B cell (primary cell): ENCODE measurements at regions of chr10 and their contacts with region 1.

Region 1: GRCh38 chr10:100009793-100010676 is at the start of gene DNMBP:
- DNase-seq: peak; percentile 92
- ATAC-seq: peak; percentile 87
- H3K4me3 ChIP-seq: peak within 1 kb of the TSS; percentile 82 to 95 (median 90)
- H3K4me3 Mint-ChIP-seq: peak within 1 kb of the TSS; percentile 95
- H3K27ac ChIP-seq: peak within 1 kb of the TSS; percentile 55 to 78
- H3K27ac Mint-ChIP-seq: peak within 1 kb of the TSS; percentile 94
- H3K4me1 ChIP-seq: peaks cover 49 to 54% of the 10 kb centered on the region in 2 donors
- H3K4me1 Mint-ChIP-seq: peaks cover 72% of the 10 kb centered on the region
- H3K27me3 ChIP-seq: no peaks in the 10 kb centered on the region
- H3K27me3 Mint-ChIP-seq: no peaks in the 10 kb centered on the region
- CTCF ChIP-seq: peak; percentile 61
- total RNA-seq, gene DNMBP: 22.6 TPM in 2 replicates

Region 2: DNA sequence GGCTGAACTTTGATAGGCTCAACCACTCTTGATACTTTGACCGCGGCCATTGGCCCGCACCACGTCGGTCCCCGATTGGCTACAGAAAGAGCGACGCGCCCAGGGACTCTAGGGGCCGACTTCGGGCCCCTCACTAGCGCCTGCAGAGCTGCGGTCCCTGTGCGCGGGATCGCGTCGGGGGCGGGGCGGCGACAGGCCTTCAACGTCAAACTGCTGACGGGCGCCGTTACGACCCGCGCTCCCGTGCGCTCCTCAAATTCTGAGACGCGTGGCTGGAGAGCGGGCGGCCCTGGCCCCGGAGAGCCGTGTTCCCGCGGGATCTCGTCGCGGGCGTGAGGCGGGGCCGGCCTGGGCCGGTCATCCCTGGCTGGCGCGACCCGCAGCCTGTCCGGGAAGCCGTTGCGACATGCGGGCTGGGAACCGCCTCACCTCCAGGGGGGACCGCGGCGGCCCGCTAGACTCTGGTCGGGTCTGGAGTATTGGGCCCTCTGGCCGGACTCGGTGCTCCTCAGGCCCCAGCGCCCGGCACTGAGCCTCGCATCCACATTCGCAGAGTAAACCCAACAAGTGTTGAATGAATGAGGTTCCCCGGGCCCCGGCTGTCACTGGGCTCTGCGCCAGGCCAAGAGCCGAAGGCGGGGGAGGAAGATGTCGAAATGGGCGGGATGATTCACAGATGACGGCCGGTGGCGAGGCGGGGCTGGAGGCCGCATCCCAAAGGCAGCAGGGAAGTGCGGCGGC is 389.2 kb before region 1 on chr10:
- CTCF ChIA-PET with region 1: no interaction called
- POLR2A ChIA-PET with region 1: no interaction called
- intact Hi-C with region 1: loop called (anchors 5 kb)
- DNase-seq: no peak
- ATAC-seq: peak; percentile 83
- H3K4me3 ChIP-seq: peak overlapping the region; percentile 57 to 88 (median 76)
- H3K4me3 Mint-ChIP-seq: peak overlapping the region; percentile 81
- H3K27ac ChIP-seq: peak overlapping the region; percentile 95 to 96
- H3K27ac Mint-ChIP-seq: peak overlapping the region; percentile 90
- H3K4me1 ChIP-seq: peaks cover 30 to 35% of the 10 kb centered on the region in 2 donors
- H3K4me1 Mint-ChIP-seq: peaks cover 45% of the 10 kb centered on the region
- H3K27me3 ChIP-seq: no peaks in the 10 kb centered on the region
- H3K27me3 Mint-ChIP-seq: no peaks in the 10 kb centered on the region
- CTCF ChIP-seq: no peak

Region 3: GRCh38 chr10:99845837-99846382 is 164.1 kb before region 1 on chr10:
- CTCF ChIA-PET with region 1: interaction called, 32 read pairs
- POLR2A ChIA-PET with region 1: no interaction called
- intact Hi-C with region 1: loop called (anchors 1 kb)
- DNase-seq: peak; percentile 85
- ATAC-seq: peak; percentile 84
- H3K4me3 ChIP-seq: peak overlapping the region in 4 of 5 experiments; percentile 10 to 61 (median 41)
- H3K4me3 Mint-ChIP-seq: peak overlapping the region; percentile 75
- H3K27ac ChIP-seq: no peak overlapping the region
- H3K27ac Mint-ChIP-seq: no peak overlapping the region
- H3K4me1 ChIP-seq: peaks cover 0 to 10% of the 10 kb centered on the region in 2 donors
- H3K4me1 Mint-ChIP-seq: peaks cover 7% of the 10 kb centered on the region
- H3K27me3 ChIP-seq: peaks cover 0 to 7% (median 0%) of the 10 kb centered on the region in 4 experiments
- H3K27me3 Mint-ChIP-seq: no peaks in the 10 kb centered on the region
- CTCF ChIP-seq: peak; percentile 93

Region 4: DNA sequence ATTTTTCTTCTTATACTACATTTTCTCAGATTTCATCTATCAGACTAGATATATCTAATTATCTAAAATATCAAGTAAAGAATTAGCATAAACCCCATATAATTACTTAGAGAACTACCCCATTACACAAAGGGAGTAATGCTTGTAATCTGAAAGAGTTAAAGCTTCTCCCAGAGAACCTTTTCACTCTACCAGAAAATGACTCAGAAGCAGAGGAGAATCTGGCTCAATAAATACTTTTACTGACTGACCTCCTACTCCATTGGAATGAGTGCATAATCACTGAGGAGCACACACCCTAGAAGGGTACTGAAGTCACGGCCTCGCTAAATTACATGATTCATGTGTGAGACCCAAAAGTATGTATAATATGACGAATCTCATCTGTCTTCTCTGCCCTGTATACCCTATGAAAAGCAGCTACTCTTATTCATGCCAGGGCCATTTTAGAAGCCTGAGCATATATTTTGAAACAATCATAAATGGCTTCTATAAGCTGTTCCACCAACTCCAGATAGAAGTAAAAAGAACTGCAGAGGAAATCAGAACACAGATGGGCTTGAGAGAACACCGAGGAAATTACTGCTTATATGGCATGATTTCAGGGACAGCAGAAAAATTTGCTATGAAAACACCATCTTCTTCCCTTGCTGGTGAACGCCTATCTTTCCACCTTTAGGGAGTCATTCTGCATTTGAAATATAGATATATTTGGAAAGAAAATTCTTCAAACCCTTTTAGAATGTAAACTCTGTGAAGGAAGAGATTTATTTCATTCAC is 33.0 kb before region 1 on chr10:
- CTCF ChIA-PET with region 1: interaction called, 16 read pairs
- POLR2A ChIA-PET with region 1: interaction called, 4 read pairs
- intact Hi-C with region 1: loop called (anchors 2 kb)
- DNase-seq: no peak
- ATAC-seq: no peak
- H3K4me3 ChIP-seq: no peak overlapping the region
- H3K4me3 Mint-ChIP-seq: no peak overlapping the region
- H3K27ac ChIP-seq: peak overlapping the region in 1 of 2 donors; percentile 26
- H3K27ac Mint-ChIP-seq: no peak overlapping the region
- H3K4me1 ChIP-seq: peaks cover 60 to 65% of the 10 kb centered on the region in 2 donors
- H3K4me1 Mint-ChIP-seq: peaks cover 66% of the 10 kb centered on the region
- H3K27me3 ChIP-seq: no peaks in the 10 kb centered on the region
- H3K27me3 Mint-ChIP-seq: no peaks in the 10 kb centered on the region
- CTCF ChIP-seq: no peak

Region 5: GRCh38 chr10:99993701-99994689 is 16.0 kb before region 1 on chr10:
- CTCF ChIA-PET with region 1: interaction called, 75 read pairs
- POLR2A ChIA-PET with region 1: interaction called, 4 read pairs
- intact Hi-C with region 1: loop called (anchors 1 kb)
- DNase-seq: peak; percentile 91
- ATAC-seq: peak; percentile 94
- H3K4me3 ChIP-seq: peak overlapping the region in 3 of 5 experiments; percentile 12 to 38 (median 15)
- H3K4me3 Mint-ChIP-seq: peak overlapping the region; percentile 84
- H3K27ac ChIP-seq: peak overlapping the region; percentile 77 to 91
- H3K27ac Mint-ChIP-seq: peak overlapping the region; percentile 93
- H3K4me1 ChIP-seq: peaks cover 26 to 29% of the 10 kb centered on the region in 2 donors
- H3K4me1 Mint-ChIP-seq: peaks cover 44% of the 10 kb centered on the region
- H3K27me3 ChIP-seq: no peaks in the 10 kb centered on the region
- H3K27me3 Mint-ChIP-seq: no peaks in the 10 kb centered on the region
- CTCF ChIP-seq: no peak

Region 6: GRCh38 chr10:100020142-100020885 is 10.3 kb after region 1 on chr10:
- CTCF ChIA-PET with region 1: interaction called, 22 read pairs
- POLR2A ChIA-PET with region 1: no interaction called
- intact Hi-C with region 1: no loop called
- DNase-seq: peak; percentile 49
- ATAC-seq: peak; percentile 66
- H3K4me3 ChIP-seq: no peak overlapping the region
- H3K4me3 Mint-ChIP-seq: peak overlapping the region; percentile 17
- H3K27ac ChIP-seq: no peak overlapping the region
- H3K27ac Mint-ChIP-seq: peak overlapping the region; percentile 64
- H3K4me1 ChIP-seq: peaks cover 12 to 15% of the 10 kb centered on the region in 2 donors
- H3K4me1 Mint-ChIP-seq: peaks cover 19% of the 10 kb centered on the region
- H3K27me3 ChIP-seq: no peaks in the 10 kb centered on the region
- H3K27me3 Mint-ChIP-seq: no peaks in the 10 kb centered on the region
- CTCF ChIP-seq: no peak

Region 7: GRCh38 chr10:100185364-100186252 is 175.6 kb after region 1 on chr10 and contains the start of gene ERLIN1:
- CTCF ChIA-PET with region 1: no interaction called
- POLR2A ChIA-PET with region 1: no interaction called
- intact Hi-C with region 1: loop called (anchors 10 kb)
- DNase-seq: peak; percentile 93
- ATAC-seq: peak; percentile 94
- H3K4me3 ChIP-seq: peak within 1 kb of the TSS; percentile 95 to 99 (median 97)
- H3K4me3 Mint-ChIP-seq: peak within 1 kb of the TSS; percentile 99
- H3K27ac ChIP-seq: peak within 1 kb of the TSS; percentile 83
- H3K27ac Mint-ChIP-seq: peak within 1 kb of the TSS; percentile 96
- H3K4me1 ChIP-seq: peaks cover 19 to 21% of the 10 kb centered on the region in 2 donors
- H3K4me1 Mint-ChIP-seq: peaks cover 46% of the 10 kb centered on the region
- H3K27me3 ChIP-seq: no peaks in the 10 kb centered on the region
- H3K27me3 Mint-ChIP-seq: no peaks in the 10 kb centered on the region
- CTCF ChIP-seq: no peak
- total RNA-seq, gene ERLIN1: 9.0 and 9.7 TPM in 2 replicates